ENCODE measurements at regions of chr10 and their contacts with region 1.

Region 1: GRCh38 chr10:22340362-22341189 is 4.7 kb upstream of the SPAG6 start:
- DNase-seq: peak; percentile 38 to 79 (median 65)
- H3K4me3 ChIP-seq: peak overlapping the region; percentile 46
- H3K4me3 Mint-ChIP-seq: peak overlapping the region; percentile 85 to 98 (median 89)
- H3K27ac ChIP-seq: peak overlapping the region; percentile 66
- H3K27ac Mint-ChIP-seq: peak overlapping the region in 7 of 8 donors; percentile 79 to 95 (median 88)
- H3K4me1 ChIP-seq: peaks cover 33% of the 10 kb centered on the region
- H3K4me1 Mint-ChIP-seq: peaks cover 15 to 33% (median 30%) of the 10 kb centered on the region in 3 donors
- H3K27me3 ChIP-seq: peaks cover 94% of the 10 kb centered on the region
- H3K27me3 Mint-ChIP-seq: peaks cover 77 to 80% of the 10 kb centered on the region in 2 donors

Region 2: DNA sequence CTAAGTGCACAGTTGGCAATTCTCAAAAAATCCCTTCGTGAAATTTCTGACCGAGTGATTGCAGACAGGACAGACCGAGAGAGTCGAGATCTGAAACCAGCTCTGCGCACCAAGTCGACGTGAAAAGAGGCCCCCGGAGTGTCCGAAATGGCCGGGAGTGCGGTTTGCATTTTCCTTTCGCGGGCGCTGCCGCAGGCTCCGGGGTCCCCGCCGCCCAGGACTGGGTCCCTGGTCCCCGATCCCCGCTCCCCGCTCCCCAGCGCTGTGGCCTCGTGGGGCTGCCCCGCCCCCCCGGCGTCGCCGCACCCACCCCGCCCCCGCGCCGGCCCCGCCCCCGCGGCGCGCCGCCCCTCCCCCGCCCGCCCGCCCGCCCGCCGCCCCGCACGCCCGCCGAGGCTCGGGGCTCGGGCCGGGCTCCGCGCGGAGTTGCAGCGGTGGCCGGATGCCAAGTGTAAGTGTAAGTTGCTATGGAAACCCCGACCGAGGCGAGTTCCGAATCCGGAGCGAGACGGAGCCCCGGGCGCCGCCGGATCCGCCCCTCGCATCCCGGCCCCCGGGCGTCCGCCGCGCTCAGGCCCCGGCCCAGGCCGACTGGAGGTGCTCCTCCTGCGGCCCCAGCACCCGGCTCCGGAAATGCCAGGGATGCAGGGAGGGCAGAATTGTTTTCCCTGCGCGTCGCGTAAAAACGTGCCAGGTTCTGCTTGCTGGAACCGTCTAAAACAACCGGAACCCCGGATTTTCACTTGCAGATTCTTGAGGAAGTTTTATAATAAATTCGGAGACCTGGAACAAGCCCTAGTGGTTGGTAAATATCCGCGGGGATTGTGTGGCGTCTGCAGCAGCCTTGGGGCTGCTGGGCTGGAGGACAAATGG is 15.1 kb before region 1 on chr10:
- CTCF ChIA-PET with region 1: interaction called, 7 read pairs
- POLR2A ChIA-PET with region 1: interaction called, 19 read pairs
- DNase-seq: peak; percentile 70 to 88 (median 82)
- H3K4me3 ChIP-seq: peak overlapping the region; percentile 42
- H3K4me3 Mint-ChIP-seq: peak overlapping the region; percentile 76 to 94 (median 87)
- H3K27ac ChIP-seq: peak overlapping the region; percentile 28
- H3K27ac Mint-ChIP-seq: peak overlapping the region; percentile 62 to 96 (median 91)
- H3K4me1 ChIP-seq: peaks cover 27% of the 10 kb centered on the region
- H3K4me1 Mint-ChIP-seq: peaks cover 34 to 42% (median 42%) of the 10 kb centered on the region in 3 donors
- H3K27me3 ChIP-seq: peaks cover 13% of the 10 kb centered on the region
- H3K27me3 Mint-ChIP-seq: peaks cover 10 to 40% of the 10 kb centered on the region in 2 donors

Measured in CD8-positive, alpha-beta memory T cell (primary cell).